Aorta (tissue), 5 donors: ENCODE measurements at regions of chr4 and their contacts with region 1.

Region 1: DNA sequence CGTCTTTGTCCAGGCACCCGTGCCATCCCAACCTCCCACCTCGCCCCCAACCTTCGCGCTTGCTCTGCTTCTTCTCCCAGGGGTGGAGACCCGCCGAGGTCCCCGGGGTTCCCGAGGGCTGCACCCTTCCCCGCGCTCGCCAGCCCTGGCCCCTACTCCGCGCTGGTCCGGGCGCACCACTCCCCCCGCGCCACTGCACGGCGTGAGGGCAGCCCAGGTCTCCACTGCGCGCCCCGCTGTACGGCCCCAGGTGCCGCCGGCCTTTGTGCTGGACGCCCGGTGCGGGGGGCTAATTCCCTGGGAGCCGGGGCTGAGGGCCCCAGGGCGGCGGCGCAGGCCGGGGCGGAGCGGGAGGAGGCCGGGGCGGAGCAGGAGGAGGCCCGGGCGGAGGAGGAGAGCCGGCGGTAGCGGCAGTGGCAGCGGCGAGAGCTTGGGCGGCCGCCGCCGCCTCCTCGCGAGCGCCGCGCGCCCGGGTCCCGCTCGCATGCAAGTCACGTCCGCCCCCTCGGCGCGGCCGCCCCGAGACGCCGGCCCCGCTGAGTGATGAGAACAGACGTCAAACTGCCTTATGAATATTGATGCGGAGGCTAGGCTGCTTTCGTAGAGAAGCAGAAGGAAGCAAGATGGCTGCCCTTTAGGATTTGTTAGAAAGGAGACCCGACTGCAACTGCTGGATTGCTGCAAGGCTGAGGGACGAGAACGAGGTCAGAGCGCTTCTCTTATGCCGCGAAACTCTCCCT is at the start of gene TET2:
- DNase-seq: peak; percentile 88 to 92
- ATAC-seq: peak; percentile 88
- H3K4me3 ChIP-seq: peak within 1 kb of the TSS; percentile 98 to 100
- H3K27ac ChIP-seq: peak within 1 kb of the TSS; percentile 11 to 84
- H3K4me1 ChIP-seq: peaks cover 0 to 6% of the 10 kb centered on the region in 2 donors
- H3K27me3 ChIP-seq: no peaks in the 10 kb centered on the region
- total RNA-seq, gene TET2: 40.3 to 40.9 TPM

Region 2: GRCh38 chr4:104966349-104967033 is 180.0 kb before region 1 on chr4:
- intact Hi-C with region 1: no loop called
- DNase-seq: no peak
- ATAC-seq: peak; percentile 72
- H3K4me3 ChIP-seq: no peak overlapping the region
- H3K27ac ChIP-seq: no peak overlapping the region
- H3K4me1 ChIP-seq: no peaks in the 10 kb centered on the region
- H3K27me3 ChIP-seq: no peaks in the 10 kb centered on the region

Region 3: GRCh38 chr4:105191621-105192210 is 45.3 kb after region 1 on chr4:
- intact Hi-C with region 1: loop called (anchors 5 kb)
- DNase-seq: no peak
- ATAC-seq: peak; percentile 43
- H3K4me3 ChIP-seq: peak overlapping the region in 1 of 2 donors; percentile 14
- H3K27ac ChIP-seq: peak overlapping the region; percentile 17 to 82
- H3K4me1 ChIP-seq: peaks cover 5 to 7% of the 10 kb centered on the region in 2 donors
- H3K27me3 ChIP-seq: no peaks in the 10 kb centered on the region

Region 4: DNA sequence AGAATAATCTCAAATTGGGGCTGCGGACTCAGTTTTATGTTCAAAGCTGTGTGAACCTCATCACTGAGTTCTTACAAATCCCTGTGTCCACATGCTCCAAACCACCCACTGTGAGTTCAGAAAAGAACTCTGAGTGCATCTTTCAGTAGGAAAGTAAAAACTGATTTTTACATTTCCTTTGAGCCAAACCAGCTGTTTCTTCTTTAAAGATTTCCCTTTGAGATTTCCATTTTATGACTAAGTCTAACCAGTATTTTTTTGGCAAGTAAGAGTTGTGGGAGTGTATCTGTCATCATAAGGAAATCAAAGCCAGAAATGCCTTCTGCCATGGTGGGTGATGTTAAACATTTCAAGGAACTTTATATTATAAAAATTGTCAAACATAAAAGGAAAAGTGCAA is 100.3 kb after region 1 on chr4:
- intact Hi-C with region 1: loop called (anchors 10 kb)
- DNase-seq: no peak
- ATAC-seq: no peak
- H3K4me3 ChIP-seq: no peak overlapping the region
- H3K27ac ChIP-seq: no peak overlapping the region
- H3K4me1 ChIP-seq: peaks cover 2% of the 10 kb centered on the region in 2 donors
- H3K27me3 ChIP-seq: no peaks in the 10 kb centered on the region

Region 5: DNA sequence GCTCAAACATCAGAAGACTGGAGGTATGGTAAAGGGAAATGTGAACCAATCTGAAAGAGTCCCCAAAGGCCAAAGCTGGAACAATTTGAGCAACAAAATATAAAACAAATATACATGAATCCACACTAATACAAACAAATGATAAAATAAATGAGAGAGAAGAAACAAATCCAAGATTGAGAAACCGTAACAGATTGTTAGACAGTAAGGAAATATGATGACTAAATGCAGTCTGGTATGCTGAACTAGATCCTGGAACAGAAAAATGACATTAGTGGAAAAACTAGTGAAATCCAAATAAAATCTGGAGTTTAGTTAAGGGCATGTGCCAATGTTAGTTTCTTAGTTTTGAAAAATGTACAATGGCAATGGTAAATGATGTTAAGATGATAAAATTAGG is 311.6 kb after region 1 on chr4:
- intact Hi-C with region 1: loop called in 1 of 2 experiments (anchors 5 kb)
- DNase-seq: no peak
- ATAC-seq: no peak
- H3K4me3 ChIP-seq: no peak overlapping the region
- H3K27ac ChIP-seq: peak overlapping the region in 1 of 2 donors; percentile 74
- H3K4me1 ChIP-seq: no peaks in the 10 kb centered on the region
- H3K27me3 ChIP-seq: no peaks in the 10 kb centered on the region

Region 6: DNA sequence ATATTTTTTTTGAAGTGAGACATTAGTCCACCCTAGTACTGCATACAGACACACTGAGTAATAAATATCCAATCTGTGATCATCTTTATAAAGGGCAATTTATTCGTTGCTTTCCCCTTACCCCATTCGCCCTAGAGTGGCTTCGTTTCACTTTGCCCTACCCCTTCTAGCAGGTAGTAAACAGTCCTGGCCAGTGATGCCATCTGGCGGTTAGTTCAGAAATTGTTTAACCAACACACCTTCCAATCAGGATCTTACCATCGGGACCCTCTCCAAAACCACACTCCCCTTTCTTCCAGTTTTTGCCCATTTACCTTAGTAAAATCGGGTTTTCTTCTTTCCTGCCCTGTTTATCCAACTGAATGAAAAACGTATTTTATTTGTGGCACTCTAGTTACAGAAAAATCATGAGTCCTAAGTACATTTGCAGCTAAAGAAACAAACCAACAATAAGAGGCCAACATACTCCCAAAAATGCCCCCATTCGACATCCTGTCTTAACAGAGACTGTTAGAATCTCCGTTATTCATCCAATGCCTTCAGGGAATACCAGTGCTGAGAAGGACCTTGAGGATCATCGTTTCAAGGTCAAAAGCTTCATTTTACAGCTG is 325.2 kb after region 1 on chr4:
- intact Hi-C with region 1: loop called (anchors 1 to 2 kb)
- DNase-seq: peak in 1 of 2 donors; percentile 70
- ATAC-seq: peak; percentile 71
- H3K4me3 ChIP-seq: peak overlapping the region; percentile 9 to 44
- H3K27ac ChIP-seq: no peak overlapping the region
- H3K4me1 ChIP-seq: peaks cover 2 to 4% of the 10 kb centered on the region in 2 donors
- H3K27me3 ChIP-seq: no peaks in the 10 kb centered on the region

Region 7: DNA sequence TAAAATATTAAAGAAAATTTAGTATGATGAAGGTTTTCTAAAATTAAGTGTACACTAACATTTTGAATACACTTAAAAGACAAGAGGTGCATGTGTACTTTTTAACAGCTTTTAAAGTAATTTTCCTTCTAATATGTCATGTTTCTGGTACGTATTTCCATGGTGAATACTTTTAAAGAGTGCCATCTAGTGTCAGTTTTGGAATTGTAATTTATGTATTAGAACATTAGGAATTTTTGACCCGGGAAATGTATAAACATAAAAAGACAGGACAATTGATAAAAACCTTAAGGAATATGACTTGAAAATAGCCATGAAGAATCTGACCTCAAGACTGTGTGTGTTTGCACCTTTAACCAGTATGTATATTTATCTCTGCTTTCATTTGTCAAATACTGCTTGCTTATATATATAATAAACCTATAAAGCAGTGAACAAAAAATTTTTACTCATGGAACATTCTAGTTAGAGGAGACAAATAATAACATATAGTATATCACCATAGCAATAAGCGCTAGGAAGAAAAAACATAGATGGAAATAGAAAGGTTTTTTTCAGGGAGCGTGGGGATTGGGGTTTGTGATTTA is 569.3 kb after region 1 on chr4:
- intact Hi-C with region 1: loop called in 1 of 2 experiments (anchors 10 kb)
- DNase-seq: no peak
- ATAC-seq: no peak
- H3K4me3 ChIP-seq: no peak overlapping the region
- H3K27ac ChIP-seq: no peak overlapping the region
- H3K4me1 ChIP-seq: peaks cover 0 to 1% of the 10 kb centered on the region in 2 donors
- H3K27me3 ChIP-seq: no peaks in the 10 kb centered on the region